Panc1 (cell line): ENCODE measurements at regions of chr2 and their contacts with region 1.

Region 1: GRCh38 chr2:46364797-46365457 is 67.7 kb downstream of the EPAS1 start:
- DNase-seq: peak; percentile 42
- ATAC-seq: peak; percentile 82
- H3K4me3 ChIP-seq: no peak overlapping the region
- H3K27ac ChIP-seq: no peak overlapping the region
- H3K4me1 ChIP-seq: 0 out of 2 replicates have a peak, but pooled peaks cover 3% of the 10 kb centered on the region
- H3K27me3 ChIP-seq: no peaks in the 10 kb centered on the region
- CTCF ChIP-seq: peak; percentile 80; the same call in 1 of the 2 replicates

Region 2: GRCh38 chr2:45993476-45993991 is 371.4 kb before region 1 on chr2:
- CTCF ChIA-PET with region 1: no interaction called
- POLR2A ChIA-PET with region 1: no interaction called
- in situ Hi-C with region 1: no loop called
- intact Hi-C with region 1: loop called (anchors 5 kb)
- DNase-seq: peak; percentile 55
- ATAC-seq: peak; percentile 77; the same call in 1 of the 2 replicates
- H3K4me3 ChIP-seq: no peak overlapping the region
- H3K27ac ChIP-seq: no peak overlapping the region
- H3K4me1 ChIP-seq: peaks cover 13% of the 10 kb centered on the region
- H3K27me3 ChIP-seq: no peaks in the 10 kb centered on the region
- CTCF ChIP-seq: peak; percentile 86

Region 3: GRCh38 chr2:46010925-46011490 is 353.9 kb before region 1 on chr2:
- CTCF ChIA-PET with region 1: no interaction called
- POLR2A ChIA-PET with region 1: no interaction called
- in situ Hi-C with region 1: no loop called
- intact Hi-C with region 1: loop called (anchors 5 kb)
- DNase-seq: no peak
- ATAC-seq: peak; percentile 85
- H3K4me3 ChIP-seq: no peak overlapping the region
- H3K27ac ChIP-seq: no peak overlapping the region
- H3K4me1 ChIP-seq: no peaks in the 10 kb centered on the region
- H3K27me3 ChIP-seq: no peaks in the 10 kb centered on the region
- CTCF ChIP-seq: peak; percentile 71; the same call in 1 of the 2 replicates

Region 4: GRCh38 chr2:46306330-46306751 is 58.6 kb before region 1 on chr2:
- CTCF ChIA-PET with region 1: interaction called, 4 read pairs
- POLR2A ChIA-PET with region 1: no interaction called
- in situ Hi-C with region 1: no loop called
- intact Hi-C with region 1: loop called (anchors 2 kb)
- DNase-seq: peak; percentile 93
- ATAC-seq: peak; percentile 65
- H3K4me3 ChIP-seq: peak overlapping the region in 1 of 2 experiments; percentile 26; a peak in 2 of 4 replicates
- H3K27ac ChIP-seq: peak overlapping the region; percentile 88
- H3K4me1 ChIP-seq: peaks cover 93% of the 10 kb centered on the region
- H3K27me3 ChIP-seq: no peaks in the 10 kb centered on the region
- CTCF ChIP-seq: no peak

Region 5: DNA sequence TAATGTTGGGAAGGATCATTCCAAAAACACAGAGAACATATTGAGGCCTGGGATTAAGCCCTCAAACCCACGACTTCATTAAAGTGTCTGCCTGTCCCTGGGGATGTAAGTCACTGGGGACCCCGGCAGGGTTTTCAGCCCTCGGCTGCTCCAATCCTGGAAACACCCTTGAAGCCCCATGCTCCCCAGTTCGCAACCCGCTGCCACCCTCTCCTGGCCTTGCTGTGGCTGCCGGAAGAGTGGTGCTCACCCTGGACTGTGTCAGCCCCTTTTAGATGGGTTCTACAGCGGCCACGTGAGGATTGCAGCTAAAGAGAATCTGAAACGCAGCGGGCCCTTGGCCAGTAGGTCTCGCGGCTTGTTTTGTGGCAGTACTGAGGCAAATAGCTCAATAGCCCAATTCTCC is 12.3 kb after region 1 on chr2:
- CTCF ChIA-PET with region 1: no interaction called
- POLR2A ChIA-PET with region 1: no interaction called
- in situ Hi-C with region 1: no loop called
- intact Hi-C with region 1: no loop called
- DNase-seq: no peak
- ATAC-seq: no peak
- H3K4me3 ChIP-seq: no peak overlapping the region
- H3K27ac ChIP-seq: no peak overlapping the region
- H3K4me1 ChIP-seq: no peaks in the 10 kb centered on the region
- H3K27me3 ChIP-seq: no peaks in the 10 kb centered on the region
- CTCF ChIP-seq: no peak